Caco-2 (cell line): ENCODE measurements at regions of chr22 and their contacts with region 1.

Region 1: DNA sequence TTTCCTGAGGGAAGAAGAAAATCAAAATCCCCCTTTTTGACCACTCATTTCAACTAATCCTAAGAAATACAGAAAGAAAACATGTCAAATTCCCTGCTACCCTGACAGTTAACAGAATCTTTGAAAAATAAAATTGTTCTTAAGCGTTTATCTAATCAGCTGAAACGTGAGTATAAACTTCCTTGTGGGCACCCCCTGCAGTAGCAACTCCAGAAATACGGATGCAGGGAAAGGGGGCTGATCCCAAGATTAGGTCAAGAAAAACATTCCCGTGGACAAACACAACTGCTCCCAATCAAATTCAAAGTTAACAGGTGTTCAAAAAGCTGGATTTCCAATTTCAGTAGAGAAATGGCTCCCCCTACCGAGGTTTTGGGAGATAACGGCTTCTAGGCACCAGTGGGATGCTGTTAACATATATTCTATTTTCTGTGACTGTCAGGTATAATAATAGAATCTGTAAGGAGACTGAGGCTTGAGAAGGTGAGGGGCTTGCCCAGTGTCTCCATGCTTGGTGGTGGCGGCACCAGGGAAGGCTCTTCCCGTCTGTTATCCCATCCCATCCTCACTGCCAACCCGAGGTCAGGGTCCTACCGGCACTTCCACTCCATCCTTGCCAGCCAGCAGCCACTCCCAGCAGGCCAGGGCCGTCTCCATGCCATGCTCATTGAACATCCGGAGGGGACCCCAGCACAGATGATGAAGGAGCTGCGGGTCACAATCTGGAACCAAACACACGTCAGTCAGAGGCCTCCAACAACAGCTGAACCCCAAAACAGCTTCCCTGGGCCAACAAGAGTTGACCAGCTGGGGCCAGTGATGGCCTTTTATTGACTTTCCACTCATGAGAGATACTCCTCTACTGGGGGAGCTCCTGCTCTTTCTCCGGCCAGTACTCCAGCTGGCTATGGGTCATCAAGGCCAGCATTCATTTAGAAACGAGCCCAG is 32.0 kb upstream of the SERPIND1 start:
- DNase-seq: peak in 1 of 2 experiments; percentile 57
- H3K4me3 ChIP-seq: no peak overlapping the region
- H3K4me3 Mint-ChIP-seq: no peak overlapping the region
- H3K27ac Mint-ChIP-seq: no peak overlapping the region
- H3K4me1 ChIP-seq: no peaks in the 10 kb centered on the region
- H3K4me1 Mint-ChIP-seq: no peaks in the 10 kb centered on the region
- H3K27me3 ChIP-seq: no peaks in the 10 kb centered on the region
- H3K27me3 Mint-ChIP-seq: no peaks in the 10 kb centered on the region
- CTCF ChIP-seq: peak; percentile 57 to 62

Region 2: GRCh38 chr22:20606041-20606783 is 135.7 kb before region 1 on chr22:
- CTCF ChIA-PET with region 1: no interaction called
- POLR2A ChIA-PET with region 1: no interaction called
- intact Hi-C with region 1: loop called (anchors 1 kb)
- DNase-seq: peak; percentile 90 to 91
- H3K4me3 ChIP-seq: no peak overlapping the region
- H3K4me3 Mint-ChIP-seq: no peak overlapping the region
- H3K27ac Mint-ChIP-seq: no peak overlapping the region
- H3K4me1 ChIP-seq: peaks cover 14% of the 10 kb centered on the region
- H3K4me1 Mint-ChIP-seq: no peaks in the 10 kb centered on the region
- H3K27me3 ChIP-seq: no peaks in the 10 kb centered on the region
- H3K27me3 Mint-ChIP-seq: no peaks in the 10 kb centered on the region
- CTCF ChIP-seq: peak; percentile 72 to 95

Region 3: DNA sequence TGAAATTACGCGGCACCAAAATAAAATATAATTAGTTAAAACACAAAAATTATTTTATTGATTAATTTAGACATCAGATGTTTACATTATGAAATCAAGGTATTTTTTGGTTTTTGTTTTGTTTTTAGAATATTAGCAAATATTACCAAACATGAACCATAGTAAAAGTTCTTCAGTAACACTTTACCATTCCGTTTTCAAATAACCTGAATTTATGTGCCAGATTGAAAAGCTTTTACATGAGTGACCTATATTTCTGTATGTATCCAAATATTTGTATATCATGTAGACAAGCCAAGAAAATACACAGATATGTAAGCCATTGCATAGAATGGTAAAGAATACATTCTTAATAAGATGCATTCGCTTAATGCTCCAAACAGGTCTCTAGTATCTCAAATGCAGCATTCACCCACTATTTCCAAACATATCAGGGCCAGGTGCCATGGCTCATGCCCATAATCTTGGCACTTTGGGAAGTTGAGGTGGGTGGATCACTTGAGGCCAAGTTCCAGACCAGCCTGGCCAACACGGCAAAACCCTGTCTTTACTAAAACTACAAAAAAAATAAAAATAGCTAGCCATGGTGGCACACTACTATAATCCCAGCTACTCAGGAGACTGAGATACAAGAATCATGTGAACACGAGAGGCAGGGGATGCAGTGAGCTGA is 70.4 kb before region 1 on chr22:
- CTCF ChIA-PET with region 1: no interaction called
- POLR2A ChIA-PET with region 1: no interaction called
- intact Hi-C with region 1: no loop called
- DNase-seq: no peak
- H3K4me3 ChIP-seq: no peak overlapping the region
- H3K4me3 Mint-ChIP-seq: no peak overlapping the region
- H3K27ac Mint-ChIP-seq: no peak overlapping the region
- H3K4me1 ChIP-seq: no peaks in the 10 kb centered on the region
- H3K4me1 Mint-ChIP-seq: no peaks in the 10 kb centered on the region
- H3K27me3 ChIP-seq: no peaks in the 10 kb centered on the region
- H3K27me3 Mint-ChIP-seq: no peaks in the 10 kb centered on the region
- CTCF ChIP-seq: no peak

Region 4: GRCh38 chr22:20752104-20752741 is 10.3 kb after region 1 on chr22:
- CTCF ChIA-PET with region 1: no interaction called
- POLR2A ChIA-PET with region 1: no interaction called
- intact Hi-C with region 1: no loop called
- DNase-seq: no peak
- H3K4me3 ChIP-seq: no peak overlapping the region
- H3K4me3 Mint-ChIP-seq: no peak overlapping the region
- H3K27ac Mint-ChIP-seq: no peak overlapping the region
- H3K4me1 ChIP-seq: no peaks in the 10 kb centered on the region
- H3K4me1 Mint-ChIP-seq: no peaks in the 10 kb centered on the region
- H3K27me3 ChIP-seq: no peaks in the 10 kb centered on the region
- H3K27me3 Mint-ChIP-seq: no peaks in the 10 kb centered on the region
- CTCF ChIP-seq: no peak

Region 5: DNA sequence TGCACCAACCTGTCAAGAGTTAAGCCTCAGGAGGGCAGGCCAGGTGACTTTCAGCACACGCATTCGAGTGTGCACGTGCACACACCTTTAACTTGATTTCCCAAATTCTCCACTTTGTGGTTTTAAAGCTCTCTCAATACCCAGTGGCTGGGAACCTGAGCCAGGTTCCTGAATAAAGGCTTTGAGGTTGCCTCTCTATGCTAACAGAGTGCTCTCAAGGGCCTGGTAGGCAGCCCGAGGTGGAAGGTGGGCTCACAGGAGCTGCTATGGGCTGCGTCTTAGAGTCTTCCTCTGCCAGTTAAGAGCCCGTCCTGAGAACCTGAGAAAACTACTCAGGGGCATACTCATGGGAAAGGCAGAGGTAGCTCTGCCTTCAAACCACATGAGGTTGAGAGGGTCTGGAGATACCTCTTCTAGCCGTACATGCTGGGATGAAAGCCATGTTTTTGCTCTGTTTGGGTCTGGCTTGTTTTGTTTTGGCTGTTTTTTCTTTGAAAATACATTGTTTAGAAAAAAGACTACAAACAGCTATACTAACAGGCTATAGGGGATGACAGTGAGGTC is 20.4 kb after region 1 on chr22:
- CTCF ChIA-PET with region 1: interaction called, 10 read pairs
- POLR2A ChIA-PET with region 1: no interaction called
- intact Hi-C with region 1: no loop called
- DNase-seq: no peak
- H3K4me3 ChIP-seq: no peak overlapping the region
- H3K4me3 Mint-ChIP-seq: no peak overlapping the region
- H3K27ac Mint-ChIP-seq: no peak overlapping the region
- H3K4me1 ChIP-seq: no peaks in the 10 kb centered on the region
- H3K4me1 Mint-ChIP-seq: no peaks in the 10 kb centered on the region
- H3K27me3 ChIP-seq: no peaks in the 10 kb centered on the region
- H3K27me3 Mint-ChIP-seq: no peaks in the 10 kb centered on the region
- CTCF ChIP-seq: no peak